Sigmoid colon (tissue), 7 donors: ENCODE measurements at regions of chr1 and their contacts with region 1.

Region 1: DNA sequence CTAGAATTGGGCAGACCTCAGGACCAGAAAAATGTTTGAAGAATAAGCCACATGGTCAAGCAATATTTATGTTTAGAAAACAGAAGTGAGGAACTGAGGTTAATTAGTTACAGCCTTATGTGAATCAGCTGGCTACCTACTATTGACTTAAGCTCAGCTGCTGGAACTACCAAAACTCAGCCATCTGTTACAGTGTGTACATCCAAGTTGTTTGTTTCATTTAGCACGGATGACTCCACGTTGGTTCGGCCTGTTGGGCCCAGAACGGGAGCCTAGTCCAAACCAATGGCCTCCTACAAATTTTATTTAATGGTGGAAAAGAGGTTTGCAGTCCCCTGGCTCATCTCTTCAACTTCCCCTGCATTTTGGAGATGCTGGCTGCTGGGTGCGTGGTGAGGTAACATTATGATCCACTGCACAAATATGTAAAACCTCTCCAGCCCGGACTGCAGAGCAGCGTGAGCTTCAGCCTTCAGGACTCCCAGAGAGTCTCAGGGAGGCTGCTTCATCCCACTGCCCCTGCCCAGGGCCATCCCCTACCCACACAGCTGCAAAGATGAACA is 143.4 kb downstream of the ZZZ3 start:
- DNase-seq: peak; percentile 77
- H3K4me3 ChIP-seq: no peak overlapping the region
- H3K27ac ChIP-seq: peak overlapping the region in 3 of 4 donors; percentile 12 to 53 (median 50)
- H3K4me1 ChIP-seq: peaks cover 0 to 9% (median 0%) of the 10 kb centered on the region in 4 donors
- H3K27me3 ChIP-seq: no peaks in the 10 kb centered on the region
- CTCF ChIP-seq: no peak
- EP300 ChIP-seq: no peak
- POLR2A ChIP-seq: no peak

Region 2: DNA sequence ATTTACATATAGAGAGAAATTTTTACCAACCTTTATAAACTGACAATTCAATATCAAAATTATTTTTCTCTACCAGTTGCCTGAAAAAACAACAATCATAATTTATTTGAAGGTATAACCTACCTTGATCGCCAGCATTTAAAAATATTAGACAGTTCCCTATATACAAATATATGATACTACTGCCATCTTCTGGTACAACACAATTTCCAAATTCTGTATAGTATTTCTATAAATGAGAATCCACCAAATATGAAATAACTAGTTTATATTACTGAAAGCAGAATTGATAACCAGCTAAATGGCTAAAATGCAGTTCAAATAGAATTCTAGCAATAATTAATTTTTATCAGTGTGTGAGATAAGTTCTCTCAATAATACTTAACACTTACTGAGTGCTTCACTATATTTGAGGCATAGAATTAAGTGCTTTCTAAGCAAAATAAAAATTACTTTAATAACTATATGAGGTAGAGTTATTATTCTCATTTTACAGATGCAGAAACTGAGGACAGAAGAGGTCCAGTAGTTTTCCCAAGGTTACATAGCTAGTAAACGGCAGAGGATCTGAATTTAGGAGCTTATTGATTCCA is 395.4 kb before region 1 on chr1:
- intact Hi-C with region 1: loop called (anchors 5 kb)
- DNase-seq: no peak
- H3K4me3 ChIP-seq: no peak overlapping the region
- H3K27ac ChIP-seq: no peak overlapping the region
- H3K4me1 ChIP-seq: no peaks in the 10 kb centered on the region
- H3K27me3 ChIP-seq: no peaks in the 10 kb centered on the region
- CTCF ChIP-seq: peak in 1 of 4 experiments; percentile 10
- EP300 ChIP-seq: no peak
- POLR2A ChIP-seq: no peak

Region 3: DNA sequence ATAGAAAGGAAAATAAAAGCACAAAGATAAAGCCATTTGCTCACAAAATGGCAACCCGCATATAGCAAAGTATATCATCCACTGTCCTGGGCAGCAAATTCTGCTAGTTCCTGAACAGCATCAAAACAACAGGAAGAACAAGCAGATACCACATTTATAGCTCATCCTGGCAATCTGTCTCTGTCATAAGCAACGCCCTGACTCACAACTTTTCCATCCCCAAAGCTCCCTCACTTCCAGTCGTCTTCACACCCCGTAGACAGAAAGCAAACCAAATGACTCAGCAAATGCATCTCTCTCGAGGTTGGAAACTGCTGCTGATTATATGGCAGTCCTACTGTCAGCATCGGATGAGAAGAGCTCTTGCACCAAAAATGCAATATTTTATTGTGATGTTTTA is 191.4 kb before region 1 on chr1:
- intact Hi-C with region 1: no loop called
- DNase-seq: no peak
- H3K4me3 ChIP-seq: no peak overlapping the region
- H3K27ac ChIP-seq: no peak overlapping the region
- H3K4me1 ChIP-seq: no peaks in the 10 kb centered on the region
- H3K27me3 ChIP-seq: no peaks in the 10 kb centered on the region
- CTCF ChIP-seq: no peak
- EP300 ChIP-seq: no peak
- POLR2A ChIP-seq: no peak